PC-3 (cell line): ENCODE measurements at regions of chr12 and their contacts with region 1.

Region 1: DNA sequence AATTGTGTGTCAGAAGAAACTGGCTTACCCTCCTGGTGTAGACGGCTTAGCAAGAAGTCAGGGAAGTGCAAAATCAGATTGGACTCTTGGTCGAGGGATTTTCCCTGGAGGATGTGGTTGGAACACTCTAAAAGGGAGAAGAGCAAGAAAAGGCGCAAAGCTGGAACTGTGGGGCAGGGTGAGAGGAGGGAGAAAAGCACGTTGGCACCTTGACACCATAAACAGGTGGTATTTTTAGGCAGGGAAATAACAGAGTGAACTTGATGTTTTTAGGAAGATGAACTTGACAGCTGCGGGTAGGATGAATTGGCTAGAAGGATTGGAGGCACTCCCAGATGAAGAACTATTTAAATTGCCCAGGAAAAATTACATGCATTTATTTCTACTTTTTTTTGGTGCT is 67.7 kb downstream of the HCAR2 start:
- DNase-seq: no peak
- ATAC-seq: no peak
- H3K4me3 ChIP-seq: no peak overlapping the region
- H3K27ac ChIP-seq: no peak overlapping the region
- H3K4me1 ChIP-seq: no peaks in the 10 kb centered on the region
- H3K27me3 ChIP-seq: no peaks in the 10 kb centered on the region
- CTCF ChIP-seq: no peak

Region 2: GRCh38 chr12:122726080-122726558 is 90.6 kb after region 1 on chr12:
- CTCF ChIA-PET with region 1: interaction called, 10 read pairs
- POLR2A ChIA-PET with region 1: no interaction called
- intact Hi-C with region 1: loop called (anchors 5 kb)
- DNase-seq: peak; percentile 92
- ATAC-seq: peak; percentile 69
- H3K4me3 ChIP-seq: peak overlapping the region; percentile 38
- H3K27ac ChIP-seq: peak overlapping the region; percentile 63
- H3K4me1 ChIP-seq: peaks cover 49% of the 10 kb centered on the region
- H3K27me3 ChIP-seq: no peaks in the 10 kb centered on the region
- CTCF ChIP-seq: no peak

Region 3: GRCh38 chr12:123346946-123347345 is 711.5 kb after region 1 on chr12:
- CTCF ChIA-PET with region 1: no interaction called
- POLR2A ChIA-PET with region 1: no interaction called
- intact Hi-C with region 1: no loop called
- DNase-seq: no peak
- ATAC-seq: no peak
- H3K4me3 ChIP-seq: no peak overlapping the region
- H3K27ac ChIP-seq: no peak overlapping the region
- H3K4me1 ChIP-seq: no peaks in the 10 kb centered on the region
- H3K27me3 ChIP-seq: no peaks in the 10 kb centered on the region
- CTCF ChIP-seq: no peak